Naive thymus-derived CD8-positive, alpha-beta T cell (primary cell): ENCODE measurements at regions of chrX and their contacts with region 1.

Region 1: DNA sequence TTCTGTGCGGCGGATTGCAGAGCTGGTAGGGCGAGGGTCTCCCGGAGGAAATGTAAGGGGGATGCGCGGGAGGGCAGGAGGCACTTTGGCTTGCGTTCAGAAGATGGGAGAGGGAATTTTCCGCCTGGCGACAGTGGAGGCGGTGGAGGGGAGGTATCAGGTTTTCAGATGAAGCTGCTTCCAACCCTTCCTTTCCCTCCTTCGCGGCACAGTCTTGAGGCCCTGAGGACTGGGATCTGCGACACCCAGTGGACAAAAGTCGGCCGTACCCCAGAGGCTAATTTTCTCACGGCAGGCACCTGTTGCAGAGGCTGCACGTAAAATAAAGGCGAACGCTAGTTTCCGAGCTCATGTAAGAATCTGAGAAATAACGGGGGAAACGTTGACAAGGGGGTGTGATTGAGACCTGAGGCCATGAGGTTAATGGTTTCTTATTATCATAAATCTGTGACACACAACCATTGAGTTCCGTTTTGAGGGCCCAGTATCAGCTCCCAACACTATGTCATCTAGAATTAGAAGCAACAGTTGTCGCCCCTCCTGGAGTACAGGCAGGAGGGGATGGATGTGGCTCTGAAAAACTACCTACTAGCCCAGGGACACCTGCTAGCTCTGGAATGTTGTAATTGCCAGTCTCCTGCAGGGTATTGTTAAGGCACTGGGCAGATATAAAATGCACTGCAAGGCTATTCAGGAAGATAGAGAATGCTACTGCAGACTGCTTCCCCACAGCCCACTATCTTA is 1.1 kb downstream of the ZCCHC18 start:
- DNase-seq: peak in 9 of 10 donors; percentile 23 to 71 (median 48)
- ATAC-seq: peak; percentile 50 to 53
- H3K4me3 Mint-ChIP-seq: peak overlapping the region; percentile 83 to 95 (median 90)
- H3K27ac Mint-ChIP-seq: peak overlapping the region; percentile 80 to 98 (median 94)
- H3K4me1 Mint-ChIP-seq: peaks cover 21 to 59% (median 45%) of the 10 kb centered on the region in 4 donors
- H3K27me3 Mint-ChIP-seq: no peaks in the 10 kb centered on the region

Region 2: DNA sequence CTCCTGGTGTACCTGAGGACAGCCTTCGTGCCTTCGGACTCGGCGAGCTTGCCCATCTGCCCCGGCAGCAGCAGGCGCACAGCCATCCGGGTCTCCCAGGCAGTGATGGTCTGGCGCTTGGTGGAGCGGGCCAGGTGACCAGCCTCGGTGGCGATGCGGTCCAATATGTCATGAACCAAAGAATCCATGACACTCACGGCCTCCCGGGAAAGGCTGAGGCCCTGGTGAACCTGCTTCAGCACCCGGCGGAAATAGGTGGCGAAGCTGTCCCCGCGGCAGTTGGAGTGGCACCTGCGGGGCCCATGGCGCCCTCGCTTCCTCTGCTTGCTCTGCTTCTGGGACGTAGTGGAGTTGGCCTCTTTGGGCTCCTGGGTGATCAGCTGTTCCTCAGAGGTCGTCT is 100.2 kb before region 1 on chrX:
- POLR2A ChIA-PET with region 1: no interaction called
- DNase-seq: no peak
- ATAC-seq: no peak
- H3K4me3 Mint-ChIP-seq: no peak overlapping the region
- H3K27ac Mint-ChIP-seq: no peak overlapping the region
- H3K4me1 Mint-ChIP-seq: no peaks in the 10 kb centered on the region
- H3K27me3 Mint-ChIP-seq: peaks cover 0 to 4% (median 0%) of the 10 kb centered on the region in 5 donors

Region 3: DNA sequence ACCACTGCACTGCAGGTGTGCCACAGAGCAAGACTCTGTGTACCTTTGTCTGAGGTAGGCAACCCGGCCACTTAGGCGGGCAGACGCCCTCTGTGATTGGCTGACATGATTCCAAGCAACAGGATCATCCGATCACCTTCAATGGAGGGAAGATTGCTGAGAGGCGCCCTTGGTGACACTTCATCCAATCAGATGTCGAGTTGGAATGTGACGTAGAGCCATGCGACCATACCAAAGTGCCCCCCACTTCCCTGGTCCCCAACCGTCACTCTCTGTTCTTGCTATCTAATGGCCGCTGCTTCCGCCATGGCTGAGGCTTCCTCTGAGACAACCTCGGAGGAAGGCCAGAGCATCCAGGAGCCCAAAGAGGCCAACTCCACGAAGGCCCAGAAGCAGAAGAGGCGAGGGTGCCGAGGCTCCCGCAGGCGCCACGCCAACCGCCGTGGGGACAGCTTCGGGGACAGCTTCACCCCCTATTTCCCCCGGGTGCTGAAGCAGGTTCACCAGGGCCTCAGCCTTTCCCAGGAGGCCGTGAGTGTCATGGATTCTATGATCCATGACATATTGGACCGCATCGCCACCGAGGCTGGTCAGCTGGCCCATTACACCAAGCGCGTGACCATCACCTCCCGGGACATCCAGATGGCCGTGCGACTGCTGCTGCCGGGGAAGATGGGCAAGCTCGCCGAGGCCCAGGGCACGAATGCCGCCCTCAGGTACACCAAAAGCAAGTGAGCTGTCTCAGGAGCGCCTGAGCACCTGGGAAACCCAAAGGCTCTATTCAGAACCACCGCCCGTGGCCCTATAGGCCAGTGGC is 73.5 kb before region 1 on chrX and contains the start of gene H2BW2:
- POLR2A ChIA-PET with region 1: no interaction called
- DNase-seq: no peak
- ATAC-seq: no peak
- H3K4me3 Mint-ChIP-seq: no peak within 1 kb of the TSS
- H3K27ac Mint-ChIP-seq: peak within 1 kb of the TSS in 1 of 10 donors; percentile 1
- H3K4me1 Mint-ChIP-seq: no peaks in the 10 kb centered on the region
- H3K27me3 Mint-ChIP-seq: peaks cover 3 to 20% (median 7%) of the 10 kb centered on the region in 5 donors
- polyA plus RNA-seq, gene H2BW2: not detected

Region 4: DNA sequence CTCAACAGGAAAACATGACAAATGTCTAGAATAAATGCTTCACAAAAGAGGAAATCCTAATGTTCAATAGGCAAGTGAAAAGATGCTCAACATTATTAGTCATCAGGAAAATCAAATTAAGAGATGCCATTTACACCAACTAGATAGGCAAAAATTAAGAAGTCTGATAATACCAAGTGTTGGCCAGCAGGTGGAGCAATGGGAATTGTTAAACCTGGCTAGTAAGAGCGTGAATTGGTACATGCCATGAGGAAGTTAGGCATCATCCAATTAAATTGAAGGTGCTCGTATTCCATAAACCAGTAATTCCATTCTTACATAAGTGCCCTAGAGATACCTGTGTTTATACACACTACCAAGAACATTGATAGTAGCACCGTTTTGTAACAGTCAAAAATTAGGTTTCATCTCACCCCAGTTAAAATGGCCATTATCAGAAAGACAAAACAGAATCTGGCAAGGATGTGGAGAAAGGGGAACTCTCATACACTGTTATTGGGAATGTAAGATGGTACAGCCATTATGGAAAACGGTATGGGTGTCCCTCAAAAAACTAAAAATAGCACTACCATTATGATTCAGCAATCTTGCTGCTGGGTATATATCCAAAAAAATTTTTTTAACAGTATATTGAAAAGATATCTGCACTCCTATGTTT is 15.1 kb before region 1 on chrX:
- POLR2A ChIA-PET with region 1: interaction called, 13 read pairs
- DNase-seq: peak; percentile 22 to 78 (median 50)
- ATAC-seq: peak; percentile 63 to 79
- H3K4me3 Mint-ChIP-seq: no peak overlapping the region
- H3K27ac Mint-ChIP-seq: peak overlapping the region in 3 of 10 donors; percentile 40 to 57 (median 40)
- H3K4me1 Mint-ChIP-seq: peaks cover 0 to 6% (median 2%) of the 10 kb centered on the region in 4 donors
- H3K27me3 Mint-ChIP-seq: no peaks in the 10 kb centered on the region

Region 5: DNA sequence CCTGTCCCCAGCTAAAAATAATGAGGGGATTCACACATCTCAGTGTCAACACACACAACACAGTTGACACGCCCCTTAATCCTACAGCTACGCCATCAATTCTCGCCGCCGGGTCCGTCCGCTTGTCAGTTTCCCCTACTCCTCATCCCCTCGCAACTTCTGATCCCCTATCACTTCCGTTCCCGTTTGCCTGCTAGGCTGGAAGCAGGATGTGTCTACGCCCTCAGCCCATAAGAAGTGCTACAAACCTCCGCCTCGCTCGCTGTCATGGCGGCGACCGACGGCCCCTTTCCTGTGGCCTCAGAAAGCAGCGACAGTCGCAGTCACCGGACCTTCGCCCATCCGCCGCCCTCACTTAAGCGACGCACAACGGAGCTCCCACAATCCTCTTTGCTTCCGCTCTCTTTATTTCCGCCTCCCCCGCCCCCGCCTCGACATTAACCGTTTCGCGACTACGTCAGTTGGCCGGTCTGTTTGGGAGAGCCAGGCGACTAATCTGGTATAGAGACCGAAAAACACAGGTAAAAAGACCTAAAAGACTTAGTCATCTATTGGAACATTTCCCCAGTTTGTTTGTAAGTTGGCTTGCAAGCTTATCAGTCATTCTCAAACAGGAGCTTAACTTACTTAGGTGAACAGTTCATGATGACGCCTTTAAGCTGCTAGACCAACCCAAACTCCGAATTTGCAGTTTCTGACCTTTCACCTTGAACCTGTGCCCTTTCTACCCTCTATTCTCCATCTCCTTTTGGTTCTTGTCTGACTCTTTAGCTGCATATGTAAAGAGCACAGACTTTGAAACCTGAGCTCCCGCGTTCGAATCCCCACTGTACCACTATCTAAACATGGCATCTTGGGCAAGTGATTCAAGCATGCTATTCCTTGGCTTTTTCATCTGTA is 43.5 kb after region 1 on chrX and contains the start of gene SLC25A53:
- POLR2A ChIA-PET with region 1: interaction called, 24 read pairs
- DNase-seq: peak; percentile 53 to 84 (median 78)
- ATAC-seq: peak; percentile 84 to 88
- H3K4me3 Mint-ChIP-seq: peak within 1 kb of the TSS; percentile 91 to 100 (median 98)
- H3K27ac Mint-ChIP-seq: peak within 1 kb of the TSS; percentile 94 to 100 (median 99)
- H3K4me1 Mint-ChIP-seq: peaks cover 2 to 24% (median 21%) of the 10 kb centered on the region in 4 donors
- H3K27me3 Mint-ChIP-seq: peaks cover 0 to 1% (median 0%) of the 10 kb centered on the region in 5 donors
- polyA plus RNA-seq, gene SLC25A53: 8.5 to 10.0 (median 9.8) TPM

Region 6: DNA sequence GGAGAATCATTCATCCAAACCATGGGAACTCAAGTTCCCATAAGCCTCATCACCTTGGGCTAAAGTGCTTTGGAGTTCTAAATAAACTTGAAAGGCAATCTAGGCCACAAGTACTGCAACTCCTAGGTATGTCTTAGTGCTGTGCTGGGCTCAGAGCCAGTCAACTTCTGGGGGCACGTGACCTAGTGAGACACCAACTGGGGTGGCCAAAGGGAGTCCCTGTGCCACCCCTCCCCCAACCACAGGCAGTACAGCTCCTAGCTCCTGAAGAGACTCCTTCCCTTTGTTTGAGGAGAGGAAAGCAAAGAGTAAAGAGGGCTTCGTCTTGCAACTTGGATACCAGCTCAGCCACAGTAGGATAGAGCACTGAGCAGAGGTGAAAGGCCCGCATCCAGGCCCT is 298.4 kb after region 1 on chrX:
- POLR2A ChIA-PET with region 1: no interaction called
- DNase-seq: no peak
- ATAC-seq: no peak
- H3K4me3 Mint-ChIP-seq: no peak overlapping the region
- H3K27ac Mint-ChIP-seq: no peak overlapping the region
- H3K4me1 Mint-ChIP-seq: no peaks in the 10 kb centered on the region
- H3K27me3 Mint-ChIP-seq: peaks cover 0 to 3% (median 0%) of the 10 kb centered on the region in 5 donors